ENCODE measurements at regions of chr6 and their contacts with region 1.

Region 1: GRCh38 chr6:25263657-25264056 is 15.5 kb upstream of the CARMIL1 start:
- DNase-seq: no peak
- ATAC-seq: no peak
- H3K4me3 ChIP-seq: no peak overlapping the region
- H3K27ac ChIP-seq: no peak overlapping the region
- H3K4me1 ChIP-seq: peaks cover 0 to 7% (median 0%) of the 10 kb centered on the region in 9 donors
- H3K27me3 ChIP-seq: no peaks in the 10 kb centered on the region
- CTCF ChIP-seq: no peak

Region 2: GRCh38 chr6:25590986-25591385 is 327.3 kb after region 1 on chr6:
- intact Hi-C with region 1: loop called in 1 of 10 experiments (anchors 10 kb)
- DNase-seq: no peak
- ATAC-seq: no peak
- H3K4me3 ChIP-seq: no peak overlapping the region
- H3K27ac ChIP-seq: no peak overlapping the region
- H3K4me1 ChIP-seq: peaks cover 0 to 4% (median 0%) of the 10 kb centered on the region in 9 donors
- H3K27me3 ChIP-seq: peaks cover 0 to 5% (median 0%) of the 10 kb centered on the region in 7 donors
- CTCF ChIP-seq: no peak

Region 3: DNA sequence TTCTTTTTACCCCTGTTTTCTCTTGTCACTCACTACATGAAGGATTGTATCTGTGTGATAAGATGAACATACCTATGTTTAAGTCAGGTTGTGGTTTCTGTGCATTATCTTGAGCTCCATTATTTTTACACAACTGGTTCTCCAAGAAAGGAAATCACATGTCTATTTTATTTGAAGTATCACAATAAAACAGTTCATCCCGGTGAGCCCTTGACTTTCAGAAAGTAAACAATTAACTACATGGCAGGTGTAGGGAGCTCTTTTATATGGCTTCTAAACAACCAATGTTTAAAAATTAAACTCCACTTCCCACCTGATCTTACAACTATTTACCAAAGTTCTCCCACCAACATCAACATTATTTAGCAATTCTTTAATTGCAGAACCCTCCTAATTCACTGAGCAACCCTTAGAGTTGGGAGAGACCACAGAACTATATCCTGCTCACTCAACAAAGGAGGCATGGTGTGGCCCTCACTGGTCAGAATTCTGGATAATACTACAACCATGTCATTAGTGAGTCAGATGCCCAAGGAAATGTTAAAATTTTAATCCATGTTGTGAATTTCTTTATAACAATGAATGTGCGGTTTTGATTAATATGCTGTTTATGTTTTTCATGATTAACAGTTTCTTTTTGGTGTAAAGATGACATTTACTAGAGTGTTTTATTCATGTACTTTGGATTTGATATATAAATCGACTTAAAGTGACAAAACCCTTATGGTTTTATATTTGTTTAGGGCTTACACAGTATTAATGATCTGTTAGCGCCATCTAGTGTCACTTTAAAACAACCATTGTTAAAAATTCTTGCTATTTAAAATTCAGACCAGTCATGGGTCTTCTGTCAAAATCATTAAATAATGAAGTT is 338.4 kb after region 1 on chr6:
- intact Hi-C with region 1: loop called in 5 of 10 experiments (anchors 5 to 10 kb)
- DNase-seq: no peak
- ATAC-seq: no peak
- H3K4me3 ChIP-seq: no peak overlapping the region
- H3K27ac ChIP-seq: no peak overlapping the region
- H3K4me1 ChIP-seq: no peaks in the 10 kb centered on the region
- H3K27me3 ChIP-seq: peaks cover 0 to 5% (median 0%) of the 10 kb centered on the region in 7 donors
- CTCF ChIP-seq: peak; percentile 26 to 76 (median 59)

Region 4: GRCh38 chr6:25670793-25671513 is 407.3 kb after region 1 on chr6:
- intact Hi-C with region 1: no loop called
- DNase-seq: no peak
- ATAC-seq: no peak
- H3K4me3 ChIP-seq: no peak overlapping the region
- H3K27ac ChIP-seq: no peak overlapping the region
- H3K4me1 ChIP-seq: no peaks in the 10 kb centered on the region
- H3K27me3 ChIP-seq: peaks cover 0 to 4% (median 0%) of the 10 kb centered on the region in 7 donors
- CTCF ChIP-seq: no peak

Measured in heart right ventricle (tissue), 16 donors.